Gastrocnemius medialis (tissue), 4 donors: ENCODE measurements at regions of chr2 and their contacts with region 1.

Region 1: GRCh38 chr2:239934571-239935171 is 90.5 kb downstream of the NDUFA10 start:
- DNase-seq: peak; percentile 35 to 71
- ATAC-seq: peak; percentile 69 to 89
- H3K4me3 ChIP-seq: no peak overlapping the region
- H3K27ac ChIP-seq: no peak overlapping the region
- H3K4me1 ChIP-seq: no peaks in the 10 kb centered on the region
- H3K27me3 ChIP-seq: no peaks in the 10 kb centered on the region
- CTCF ChIP-seq: peak; percentile 54 to 78 (median 71)
- POLR2A ChIP-seq: no peak

Region 2: DNA sequence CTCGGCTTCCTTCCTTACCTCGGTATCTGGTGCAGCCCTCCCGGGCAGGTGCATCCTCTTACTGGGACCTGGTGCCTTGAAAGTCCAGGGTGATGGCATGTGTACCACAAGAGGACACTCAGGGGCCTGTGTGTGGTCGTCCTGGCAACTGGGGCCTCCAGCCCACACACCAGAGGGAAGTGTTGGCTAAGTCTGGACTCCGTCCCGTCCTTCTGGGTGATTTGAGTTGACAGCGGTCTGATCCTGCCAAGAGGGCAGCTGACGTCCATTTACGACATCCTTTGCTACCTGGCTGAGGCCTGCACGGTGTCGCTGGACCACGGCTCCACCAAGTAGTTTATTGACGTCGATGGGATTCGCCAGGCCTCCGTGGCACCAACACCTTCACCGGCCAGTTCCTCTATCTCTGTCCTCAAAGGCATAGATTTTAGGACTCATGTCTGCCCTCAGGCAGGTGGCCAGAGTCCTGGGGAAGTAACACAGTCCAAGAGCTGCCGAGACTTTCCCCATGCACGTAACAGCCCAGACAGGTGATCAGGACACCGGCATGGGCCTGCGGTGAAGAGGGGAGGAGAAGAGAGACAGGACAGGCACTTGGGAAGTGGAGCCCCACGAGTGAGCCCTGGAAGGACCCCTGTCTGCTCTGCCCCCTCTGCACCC is 347.9 kb before region 1 on chr2:
- in situ Hi-C with region 1: no loop called
- intact Hi-C with region 1: no loop called
- DNase-seq: peak in 1 of 2 donors; percentile 37
- ATAC-seq: peak; percentile 37 to 57
- H3K4me3 ChIP-seq: no peak overlapping the region
- H3K27ac ChIP-seq: no peak overlapping the region
- H3K4me1 ChIP-seq: no peaks in the 10 kb centered on the region
- H3K27me3 ChIP-seq: no peaks in the 10 kb centered on the region
- CTCF ChIP-seq: no peak
- POLR2A ChIP-seq: no peak

Region 3: GRCh38 chr2:239831001-239831731 is 103.5 kb before region 1 on chr2:
- in situ Hi-C with region 1: no loop called
- intact Hi-C with region 1: no loop called
- DNase-seq: no peak
- ATAC-seq: no peak
- H3K4me3 ChIP-seq: no peak overlapping the region
- H3K27ac ChIP-seq: no peak overlapping the region
- H3K4me1 ChIP-seq: no peaks in the 10 kb centered on the region
- H3K27me3 ChIP-seq: peaks cover 0 to 5% (median 0%) of the 10 kb centered on the region in 3 donors
- CTCF ChIP-seq: no peak
- POLR2A ChIP-seq: no peak

Region 4: DNA sequence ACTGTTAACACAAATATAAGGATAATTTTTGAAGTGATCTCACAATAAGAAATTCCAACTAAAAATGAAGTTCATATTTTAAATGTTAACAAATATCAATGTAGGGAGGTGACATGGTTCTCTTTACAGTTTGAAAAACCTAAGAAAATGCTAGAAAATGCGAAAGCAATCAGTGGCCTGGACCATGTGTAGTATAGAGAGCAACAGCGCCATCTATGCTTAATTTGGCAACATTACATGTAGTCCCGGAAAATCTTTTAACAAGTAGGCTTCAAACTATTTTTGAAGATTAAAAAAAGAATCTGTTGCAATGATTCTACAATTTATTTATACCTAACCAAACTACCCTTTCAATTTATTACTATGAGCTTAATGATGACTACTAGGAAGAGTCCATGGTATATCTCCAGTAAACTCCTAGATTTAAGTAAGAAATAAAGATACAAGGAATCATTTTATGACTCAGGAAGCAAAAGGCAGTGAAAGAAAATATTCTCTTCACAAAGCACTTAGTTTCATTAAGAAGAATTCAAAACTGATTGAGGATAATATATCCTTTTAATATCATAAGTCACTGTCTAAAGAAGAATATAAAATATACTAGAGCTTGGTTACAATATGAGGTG is 57.1 kb after region 1 on chr2:
- in situ Hi-C with region 1: loop called in 2 of 4 experiments (anchors 5 to 10 kb)
- intact Hi-C with region 1: loop called (anchors 1 kb)
- DNase-seq: no peak
- ATAC-seq: peak; percentile 39 to 60
- H3K4me3 ChIP-seq: no peak overlapping the region
- H3K27ac ChIP-seq: no peak overlapping the region
- H3K4me1 ChIP-seq: no peaks in the 10 kb centered on the region
- H3K27me3 ChIP-seq: no peaks in the 10 kb centered on the region
- CTCF ChIP-seq: peak; percentile 56 to 86 (median 69)
- POLR2A ChIP-seq: no peak

Region 5: GRCh38 chr2:239997686-239998405 is 63.2 kb after region 1 on chr2:
- in situ Hi-C with region 1: loop called in 2 of 4 experiments (anchors 5 to 10 kb)
- intact Hi-C with region 1: no loop called
- DNase-seq: peak in 1 of 2 donors; percentile 21
- ATAC-seq: peak; percentile 76 to 82
- H3K4me3 ChIP-seq: no peak overlapping the region
- H3K27ac ChIP-seq: peak overlapping the region in 2 of 4 donors; percentile 67 to 68
- H3K4me1 ChIP-seq: peaks cover 5 to 9% of the 10 kb centered on the region in 2 donors
- H3K27me3 ChIP-seq: no peaks in the 10 kb centered on the region
- CTCF ChIP-seq: no peak
- POLR2A ChIP-seq: no peak